Sigmoid colon (tissue), 7 donors: ENCODE measurements at regions of chr20 and their contacts with region 1.

Region 1: GRCh38 chr20:13638496-13639222 is at the start of gene TASP1:
- DNase-seq: peak; percentile 98
- H3K4me3 ChIP-seq: peak within 1 kb of the TSS; percentile 79 to 99 (median 94)
- H3K27ac ChIP-seq: peak within 1 kb of the TSS; percentile 74 to 81 (median 80)
- H3K4me1 ChIP-seq: peaks cover 0 to 13% (median 11%) of the 10 kb centered on the region in 4 donors
- H3K27me3 ChIP-seq: no peaks in the 10 kb centered on the region
- CTCF ChIP-seq: no peak
- EP300 ChIP-seq: no peak
- POLR2A ChIP-seq: peak in 1 of 2 donors; percentile 41
- total RNA-seq, gene TASP1: 7.8 to 13.0 (median 11.8) TPM

Region 2: GRCh38 chr20:13784893-13785715 is 146.4 kb after region 1 on chr20 and contains the starts of genes ESF1 and NDUFAF5:
- intact Hi-C with region 1: loop called (anchors 2 kb)
- DNase-seq: peak; percentile 97
- H3K4me3 ChIP-seq: peak within 1 kb of the TSS; percentile 67 to 92 (median 77)
- H3K27ac ChIP-seq: peak within 1 kb of the TSS; percentile 83 to 95 (median 90)
- H3K4me1 ChIP-seq: peaks cover 0 to 39% (median 36%) of the 10 kb centered on the region in 4 donors
- H3K27me3 ChIP-seq: no peaks in the 10 kb centered on the region
- CTCF ChIP-seq: no peak
- EP300 ChIP-seq: peak in 1 of 4 donors; percentile 77
- POLR2A ChIP-seq: peak; percentile 42 to 51
- total RNA-seq, gene ESF1: 14.0 to 20.5 (median 16.0) TPM
- total RNA-seq, gene NDUFAF5: 17.4 to 21.7 (median 18.5) TPM